GM12878 (cell line): ENCODE measurements at regions of chr11 and their contacts with region 1.

Region 1: DNA sequence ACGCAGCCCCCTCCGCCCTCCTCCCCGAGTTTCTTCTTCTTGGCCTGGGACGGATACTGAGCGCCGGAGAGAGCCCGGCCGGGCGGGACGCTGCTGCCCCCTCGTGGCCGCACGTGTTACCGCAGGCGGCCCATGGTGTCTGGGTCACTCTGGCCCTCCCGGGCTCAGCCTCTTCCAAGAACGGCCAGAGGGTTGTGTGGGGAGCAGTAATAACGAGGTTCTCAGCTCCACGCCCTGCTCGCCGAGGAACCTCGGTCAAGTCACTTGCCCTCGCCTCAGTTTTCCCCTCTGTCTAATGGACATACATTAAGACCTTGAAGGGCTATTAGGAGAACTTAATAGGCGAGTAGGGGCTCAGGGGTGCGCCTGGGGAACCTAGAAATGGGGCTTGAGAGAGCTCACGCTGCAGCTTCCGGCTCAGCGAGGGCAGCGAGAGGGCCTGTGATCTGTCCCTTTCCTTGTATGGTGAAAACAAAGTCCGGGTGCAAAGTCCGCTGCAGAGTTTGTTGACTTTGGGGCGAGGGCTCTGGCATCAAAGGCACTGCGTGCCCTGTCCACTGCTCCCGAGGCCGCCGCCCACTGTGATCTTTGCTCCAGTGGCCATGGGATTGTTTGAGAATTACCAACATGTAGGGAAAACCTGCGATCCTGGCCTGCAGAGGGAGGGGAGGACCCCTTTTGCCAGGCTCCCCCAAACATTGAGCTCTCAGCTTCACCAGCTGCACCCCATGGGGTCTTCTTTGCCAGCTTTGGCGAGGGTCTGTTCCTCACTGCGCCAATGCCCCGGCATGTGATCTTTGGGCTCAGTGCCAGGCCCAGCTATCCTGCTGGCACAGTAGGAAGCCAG is 14.4 kb upstream of the LRP5 start:
- DNase-seq: no peak
- ATAC-seq: peak; percentile 99
- H3K4me3 ChIP-seq: no peak overlapping the region
- H3K27ac ChIP-seq: no peak overlapping the region
- H3K4me1 ChIP-seq: peaks cover 9% of the 10 kb centered on the region
- H3K27me3 ChIP-seq: no peaks in the 10 kb centered on the region
- CTCF ChIP-seq: peak; percentile 95 to 99 (median 98)
- EP300 ChIP-seq: no peak
- POLR2A ChIP-seq: no peak
- RAD21 ChIP-seq: peak; percentile 100

Region 2: GRCh38 chr11:68010090-68011041 is 287.7 kb before region 1 on chr11 and contains the start of gene ALDH3B1:
- CTCF ChIA-PET with region 1: interaction called, 10 read pairs
- POLR2A ChIA-PET with region 1: no interaction called
- RAD21 ChIA-PET with region 1: no interaction called
- SMC1A ChIA-PET with region 1: no interaction called
- in situ Hi-C with region 1: no loop called
- intact Hi-C with region 1: no loop called
- DNase-seq: no peak
- ATAC-seq: peak; percentile 74
- H3K4me3 ChIP-seq: no peak within 1 kb of the TSS
- H3K27ac ChIP-seq: no peak within 1 kb of the TSS
- H3K4me1 ChIP-seq: peaks cover 23% of the 10 kb centered on the region
- H3K27me3 ChIP-seq: no peaks in the 10 kb centered on the region
- CTCF ChIP-seq: no peak
- EP300 ChIP-seq: no peak
- POLR2A ChIP-seq: no peak
- RAD21 ChIP-seq: no peak
- polyA plus RNA-seq, gene ALDH3B1: 0.03 to 0.13 TPM

Region 3: DNA sequence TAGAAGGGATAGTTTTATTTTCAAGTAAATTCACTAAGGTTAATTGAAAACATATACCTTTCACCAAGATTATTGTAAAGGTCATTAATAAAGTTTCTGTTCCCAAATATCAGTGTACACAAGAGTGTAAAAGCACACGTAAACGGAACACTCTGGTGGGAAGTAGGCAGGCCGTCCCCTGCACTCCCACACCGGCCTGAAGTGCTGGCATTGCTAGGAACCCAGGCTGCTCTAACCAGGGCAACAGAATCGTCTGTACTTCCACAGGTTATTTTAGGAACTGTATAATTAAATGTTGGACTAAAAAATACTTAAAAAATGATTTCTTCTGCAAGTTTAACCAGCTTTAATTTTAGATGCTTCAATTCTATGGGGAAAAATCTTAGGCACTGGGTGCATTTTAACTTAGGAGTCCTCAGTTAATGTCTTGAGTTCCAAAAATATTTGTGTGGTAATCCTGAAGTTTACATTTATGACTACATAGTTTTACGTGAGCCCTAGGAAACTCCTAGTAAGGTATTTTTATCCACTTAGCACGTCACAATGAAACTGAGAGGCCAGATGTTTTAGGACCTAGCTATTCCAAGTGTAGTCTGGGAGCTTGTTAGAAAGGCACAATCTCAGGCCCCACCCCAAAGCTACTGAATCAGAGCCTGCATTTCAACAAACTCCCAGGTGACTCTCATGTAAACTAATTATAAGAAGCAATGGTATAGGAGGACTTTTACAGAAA is 116.2 kb before region 1 on chr11:
- CTCF ChIA-PET with region 1: no interaction called
- POLR2A ChIA-PET with region 1: no interaction called
- RAD21 ChIA-PET with region 1: no interaction called
- SMC1A ChIA-PET with region 1: no interaction called
- in situ Hi-C with region 1: no loop called
- intact Hi-C with region 1: no loop called
- DNase-seq: no peak
- ATAC-seq: no peak
- H3K4me3 ChIP-seq: no peak overlapping the region
- H3K27ac ChIP-seq: no peak overlapping the region
- H3K4me1 ChIP-seq: 0 out of 2 replicates have a peak, but pooled peaks cover 4% of the 10 kb centered on the region
- H3K27me3 ChIP-seq: no peaks in the 10 kb centered on the region
- CTCF ChIP-seq: no peak
- EP300 ChIP-seq: no peak
- POLR2A ChIP-seq: no peak
- RAD21 ChIP-seq: no peak

Region 4: DNA sequence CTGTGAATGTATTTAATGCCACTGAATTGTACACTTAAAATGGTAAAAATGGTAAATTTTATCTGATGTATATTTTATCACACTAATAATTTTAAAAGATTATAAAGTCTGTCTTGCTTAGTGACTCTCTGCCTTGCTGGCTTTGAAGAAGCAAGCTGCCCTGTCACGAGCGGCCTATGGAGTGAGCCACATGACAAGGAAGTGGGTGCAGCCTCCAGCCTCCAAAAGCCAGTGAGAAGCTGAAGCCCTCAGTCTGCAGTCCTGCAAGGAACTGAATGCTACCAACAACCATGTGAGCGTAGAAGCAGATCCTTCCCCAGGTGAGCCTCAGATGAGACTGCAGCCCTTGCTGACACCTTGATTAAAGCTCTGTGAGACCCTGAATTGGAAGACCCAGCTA is 46.3 kb before region 1 on chr11:
- CTCF ChIA-PET with region 1: interaction called, 365 read pairs
- POLR2A ChIA-PET with region 1: interaction called, 6 read pairs
- RAD21 ChIA-PET with region 1: interaction called, 186 read pairs
- SMC1A ChIA-PET with region 1: interaction called, 134 read pairs
- in situ Hi-C with region 1: loop called (anchors 5 kb)
- intact Hi-C with region 1: no loop called
- DNase-seq: no peak
- ATAC-seq: no peak
- H3K4me3 ChIP-seq: no peak overlapping the region
- H3K27ac ChIP-seq: no peak overlapping the region
- H3K4me1 ChIP-seq: no peaks in the 10 kb centered on the region
- H3K27me3 ChIP-seq: no peaks in the 10 kb centered on the region; a peak in 1 of 4 replicates
- CTCF ChIP-seq: no peak
- EP300 ChIP-seq: no peak
- POLR2A ChIP-seq: no peak
- RAD21 ChIP-seq: no peak

Region 5: DNA sequence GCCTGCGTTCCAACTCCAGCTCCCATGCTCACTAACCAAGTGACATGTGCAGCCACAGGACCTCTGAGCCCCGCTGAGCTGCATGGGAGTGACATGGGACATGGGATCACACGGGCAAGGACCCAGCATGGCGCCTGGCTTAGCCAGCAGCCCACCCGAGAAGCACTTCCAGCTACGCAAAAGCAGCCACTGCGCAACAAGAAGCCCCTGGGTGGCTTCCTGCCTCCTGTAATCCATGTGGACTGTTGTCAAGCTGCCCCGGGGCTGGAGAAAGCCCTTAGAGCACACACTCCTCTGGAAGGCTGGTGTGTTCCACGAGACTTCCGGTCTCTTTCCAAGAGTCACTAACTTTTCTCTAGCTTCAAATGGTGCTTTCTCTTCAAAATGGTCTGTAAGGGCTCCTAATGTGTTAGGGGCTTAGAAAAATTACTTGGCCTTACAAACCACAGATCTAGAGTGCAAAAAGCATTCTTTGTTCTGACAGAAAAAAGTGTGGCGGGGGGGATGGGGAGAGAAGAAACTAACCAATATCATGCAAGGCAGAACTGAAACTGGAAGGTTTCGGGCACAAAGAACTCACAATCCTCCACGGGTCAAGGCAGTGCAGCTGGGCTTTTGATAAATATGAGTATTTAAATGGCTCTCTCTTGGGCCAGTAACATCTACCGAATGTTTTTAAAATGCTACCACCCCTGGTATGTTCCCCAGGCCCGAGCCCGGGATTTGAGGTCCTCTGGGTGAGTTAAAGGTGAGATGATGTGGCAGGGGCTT is 31.7 kb before region 1 on chr11:
- CTCF ChIA-PET with region 1: interaction called, 365 read pairs
- POLR2A ChIA-PET with region 1: interaction called, 28 read pairs
- RAD21 ChIA-PET with region 1: interaction called, 186 read pairs
- SMC1A ChIA-PET with region 1: interaction called, 134 read pairs
- in situ Hi-C with region 1: no loop called
- intact Hi-C with region 1: loop called (anchors 1 kb)
- DNase-seq: peak; percentile 81
- ATAC-seq: peak; percentile 86
- H3K4me3 ChIP-seq: peak overlapping the region; percentile 60
- H3K27ac ChIP-seq: peak overlapping the region; percentile 93
- H3K4me1 ChIP-seq: peaks cover 39% of the 10 kb centered on the region
- H3K27me3 ChIP-seq: no peaks in the 10 kb centered on the region
- CTCF ChIP-seq: no peak
- EP300 ChIP-seq: peak; percentile 71 to 81; a peak in 3 of 4 replicates
- POLR2A ChIP-seq: no peak
- RAD21 ChIP-seq: 0 out of 2 replicates have a peak, but pooled peaks have one; percentile 31

Region 6: GRCh38 chr11:68282141-68282970 is 15.7 kb before region 1 on chr11:
- CTCF ChIA-PET with region 1: interaction called, 17 read pairs
- POLR2A ChIA-PET with region 1: interaction called, 6 read pairs
- RAD21 ChIA-PET with region 1: interaction called, 4 read pairs
- SMC1A ChIA-PET with region 1: interaction called, 10 read pairs
- in situ Hi-C with region 1: no loop called
- intact Hi-C with region 1: no loop called
- DNase-seq: peak; percentile 92
- ATAC-seq: peak; percentile 99
- H3K4me3 ChIP-seq: peak overlapping the region; percentile 48; the same call in 1 of the 2 replicates
- H3K27ac ChIP-seq: peak overlapping the region; percentile 61
- H3K4me1 ChIP-seq: peaks cover 16% of the 10 kb centered on the region
- H3K27me3 ChIP-seq: no peaks in the 10 kb centered on the region
- CTCF ChIP-seq: no peak
- EP300 ChIP-seq: peak; percentile 57 to 60; a peak in 2 of 4 replicates
- POLR2A ChIP-seq: no peak
- RAD21 ChIP-seq: no peak

Region 7: GRCh38 chr11:68321293-68322041 is 23.4 kb after region 1 on chr11:
- CTCF ChIA-PET with region 1: no interaction called
- POLR2A ChIA-PET with region 1: no interaction called
- RAD21 ChIA-PET with region 1: no interaction called
- SMC1A ChIA-PET with region 1: no interaction called
- in situ Hi-C with region 1: no loop called
- intact Hi-C with region 1: no loop called
- DNase-seq: no peak
- ATAC-seq: no peak
- H3K4me3 ChIP-seq: no peak overlapping the region
- H3K27ac ChIP-seq: no peak overlapping the region
- H3K4me1 ChIP-seq: no peaks in the 10 kb centered on the region
- H3K27me3 ChIP-seq: no peaks in the 10 kb centered on the region
- CTCF ChIP-seq: no peak
- EP300 ChIP-seq: no peak
- POLR2A ChIP-seq: no peak
- RAD21 ChIP-seq: no peak

Region 8: DNA sequence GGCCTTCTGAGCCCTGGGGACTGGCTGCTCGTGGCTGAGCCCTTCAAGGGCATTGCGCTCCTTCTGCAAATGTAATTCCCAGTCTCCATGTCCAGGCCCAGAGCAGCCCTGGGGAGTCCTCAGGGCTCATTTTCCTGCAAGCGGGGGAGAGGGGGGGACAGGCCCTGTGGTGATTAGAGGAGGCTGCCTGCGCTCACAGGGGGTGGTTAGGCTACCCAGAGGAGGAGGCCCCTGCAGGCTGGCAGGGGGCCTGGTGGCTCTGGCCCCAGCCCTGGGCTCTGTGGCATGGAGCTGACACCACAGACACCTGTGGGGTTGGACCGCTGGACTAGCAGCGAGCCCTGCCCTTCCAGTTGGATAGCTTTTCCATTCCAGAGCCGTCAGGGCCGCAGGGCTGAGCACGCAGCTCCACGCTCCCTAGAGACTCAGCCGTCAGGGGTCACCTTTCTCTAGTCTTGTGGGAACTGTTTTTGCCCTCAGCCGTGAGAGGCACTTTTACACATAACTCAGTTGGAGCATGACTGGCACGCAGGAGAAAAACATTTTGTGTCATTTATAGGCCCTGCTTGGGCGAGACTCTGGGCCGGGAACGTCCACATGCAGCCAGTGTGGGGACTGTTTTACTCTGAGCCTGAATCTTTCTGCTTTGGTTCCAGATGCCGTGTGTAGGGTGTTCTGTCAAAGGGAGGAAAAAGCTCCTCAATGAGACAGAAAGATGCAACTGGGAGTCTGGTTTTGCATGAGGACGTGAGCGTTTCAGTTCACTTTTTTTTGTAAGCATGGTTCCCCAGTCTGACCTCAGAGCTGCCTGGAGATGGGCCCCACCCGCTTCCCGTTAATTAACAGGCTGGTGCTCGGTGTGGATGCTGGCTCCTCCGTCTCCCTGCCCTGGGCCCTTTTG is 72.4 kb after region 1 on chr11:
- CTCF ChIA-PET with region 1: interaction called, 29 read pairs
- POLR2A ChIA-PET with region 1: no interaction called
- RAD21 ChIA-PET with region 1: interaction called, 5 read pairs
- SMC1A ChIA-PET with region 1: interaction called, 5 read pairs
- in situ Hi-C with region 1: no loop called
- intact Hi-C with region 1: no loop called
- DNase-seq: peak; percentile 89
- ATAC-seq: peak; percentile 91
- H3K4me3 ChIP-seq: peak overlapping the region; percentile 34; the same call in 1 of the 2 replicates
- H3K27ac ChIP-seq: peak overlapping the region; percentile 89
- H3K4me1 ChIP-seq: peaks cover 33% of the 10 kb centered on the region
- H3K27me3 ChIP-seq: no peaks in the 10 kb centered on the region
- CTCF ChIP-seq: no peak
- EP300 ChIP-seq: peak; percentile 86 to 90; a peak in 3 of 4 replicates
- POLR2A ChIP-seq: 0 out of 2 replicates have a peak, but pooled peaks have one; percentile 26
- RAD21 ChIP-seq: 0 out of 2 replicates have a peak, but pooled peaks have one; percentile 13

Region 9: GRCh38 chr11:68447015-68447801 is 149.2 kb after region 1 on chr11:
- CTCF ChIA-PET with region 1: interaction called, 4 read pairs
- POLR2A ChIA-PET with region 1: no interaction called
- RAD21 ChIA-PET with region 1: no interaction called
- SMC1A ChIA-PET with region 1: no interaction called
- in situ Hi-C with region 1: no loop called
- intact Hi-C with region 1: loop called (anchors 5 kb)
- DNase-seq: no peak
- ATAC-seq: peak; percentile 100
- H3K4me3 ChIP-seq: no peak overlapping the region
- H3K27ac ChIP-seq: no peak overlapping the region
- H3K4me1 ChIP-seq: no peaks in the 10 kb centered on the region
- H3K27me3 ChIP-seq: no peaks in the 10 kb centered on the region
- CTCF ChIP-seq: peak; percentile 90 to 95 (median 91)
- EP300 ChIP-seq: no peak
- POLR2A ChIP-seq: no peak
- RAD21 ChIP-seq: peak; percentile 82